GM12878 (cell line): ENCODE measurements at regions of chr1 and their contacts with region 1.

Region 1: DNA sequence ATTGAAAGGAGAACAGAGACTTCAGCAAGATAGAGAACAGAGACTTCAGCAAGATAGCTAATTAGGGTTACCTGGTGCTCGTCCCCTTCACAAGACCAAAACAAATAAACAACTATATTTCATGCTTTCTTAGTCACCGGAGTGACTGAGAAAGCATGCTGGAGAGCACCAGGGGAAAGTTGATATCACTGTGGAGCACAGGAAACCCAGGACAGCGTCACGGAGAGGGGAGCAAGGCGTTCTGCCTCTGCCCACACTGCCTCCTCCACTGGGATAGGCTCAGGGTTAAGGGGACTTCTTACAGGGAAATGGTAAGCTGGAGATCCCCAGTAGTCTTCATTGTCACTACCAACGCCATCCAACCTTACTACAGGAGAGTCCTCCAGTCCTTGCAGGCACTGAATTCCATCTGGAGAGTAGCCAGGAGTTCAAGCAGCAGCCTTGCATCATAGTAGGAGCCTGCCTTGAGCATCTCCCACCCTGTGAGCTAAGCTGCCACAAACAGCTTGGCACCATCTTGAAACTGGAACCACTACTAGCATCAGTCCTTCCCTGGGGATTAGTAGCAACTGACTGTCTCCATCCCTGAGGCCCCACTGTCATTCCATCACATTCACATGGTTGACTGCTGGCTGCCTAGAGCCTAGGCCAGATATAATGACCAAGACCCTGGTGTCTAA is 239.4 kb downstream of the PLPP3 start:
- DNase-seq: no peak
- ATAC-seq: peak; percentile 76
- H3K4me3 ChIP-seq: no peak overlapping the region
- H3K27ac ChIP-seq: no peak overlapping the region
- H3K4me1 ChIP-seq: no peaks in the 10 kb centered on the region
- H3K27me3 ChIP-seq: no peaks in the 10 kb centered on the region
- CTCF ChIP-seq: no peak
- EP300 ChIP-seq: no peak
- POLR2A ChIP-seq: no peak
- RAD21 ChIP-seq: no peak

Region 2: GRCh38 chr1:55712148-55712547 is 627.8 kb before region 1 on chr1:
- CTCF ChIA-PET with region 1: no interaction called
- POLR2A ChIA-PET with region 1: no interaction called
- RAD21 ChIA-PET with region 1: no interaction called
- SMC1A ChIA-PET with region 1: no interaction called
- in situ Hi-C with region 1: no loop called
- intact Hi-C with region 1: no loop called
- DNase-seq: no peak
- ATAC-seq: no peak
- H3K4me3 ChIP-seq: no peak overlapping the region
- H3K27ac ChIP-seq: no peak overlapping the region
- H3K4me1 ChIP-seq: no peaks in the 10 kb centered on the region
- H3K27me3 ChIP-seq: no peaks in the 10 kb centered on the region; a peak in 1 of 4 replicates
- CTCF ChIP-seq: no peak
- EP300 ChIP-seq: no peak
- POLR2A ChIP-seq: no peak
- RAD21 ChIP-seq: no peak

Region 3: GRCh38 chr1:56235909-56236510 is 103.9 kb before region 1 on chr1:
- CTCF ChIA-PET with region 1: no interaction called
- POLR2A ChIA-PET with region 1: no interaction called
- RAD21 ChIA-PET with region 1: no interaction called
- SMC1A ChIA-PET with region 1: no interaction called
- in situ Hi-C with region 1: no loop called
- intact Hi-C with region 1: no loop called
- DNase-seq: no peak
- ATAC-seq: no peak
- H3K4me3 ChIP-seq: no peak overlapping the region
- H3K27ac ChIP-seq: no peak overlapping the region
- H3K4me1 ChIP-seq: no peaks in the 10 kb centered on the region
- H3K27me3 ChIP-seq: no peaks in the 10 kb centered on the region
- CTCF ChIP-seq: no peak
- EP300 ChIP-seq: no peak
- POLR2A ChIP-seq: no peak
- RAD21 ChIP-seq: no peak

Region 4: GRCh38 chr1:56355422-56355821 is 15.5 kb after region 1 on chr1:
- CTCF ChIA-PET with region 1: interaction called, 6 read pairs
- POLR2A ChIA-PET with region 1: no interaction called
- RAD21 ChIA-PET with region 1: no interaction called
- SMC1A ChIA-PET with region 1: interaction called, 12 read pairs
- in situ Hi-C with region 1: no loop called
- intact Hi-C with region 1: no loop called
- DNase-seq: no peak
- ATAC-seq: no peak
- H3K4me3 ChIP-seq: no peak overlapping the region
- H3K27ac ChIP-seq: no peak overlapping the region
- H3K4me1 ChIP-seq: no peaks in the 10 kb centered on the region
- H3K27me3 ChIP-seq: no peaks in the 10 kb centered on the region
- CTCF ChIP-seq: no peak
- EP300 ChIP-seq: no peak
- POLR2A ChIP-seq: no peak
- RAD21 ChIP-seq: no peak

Region 5: GRCh38 chr1:56396581-56396980 is 56.7 kb after region 1 on chr1:
- CTCF ChIA-PET with region 1: interaction called, 3 read pairs
- POLR2A ChIA-PET with region 1: interaction called, 3 read pairs
- RAD21 ChIA-PET with region 1: no interaction called
- SMC1A ChIA-PET with region 1: interaction called, 10 read pairs
- in situ Hi-C with region 1: no loop called
- intact Hi-C with region 1: no loop called
- DNase-seq: no peak
- ATAC-seq: no peak
- H3K4me3 ChIP-seq: no peak overlapping the region
- H3K27ac ChIP-seq: no peak overlapping the region
- H3K4me1 ChIP-seq: no peaks in the 10 kb centered on the region
- H3K27me3 ChIP-seq: no peaks in the 10 kb centered on the region
- CTCF ChIP-seq: no peak
- EP300 ChIP-seq: no peak
- POLR2A ChIP-seq: no peak
- RAD21 ChIP-seq: no peak